Naive thymus-derived CD4-positive, alpha-beta T cell (primary cell): ENCODE measurements at regions of chr3 and their contacts with region 1.

Region 1: GRCh38 chr3:181726351-181727330 is 14.9 kb downstream of the SOX2 start:
- DNase-seq: no peak
- ATAC-seq: no peak
- H3K4me3 ChIP-seq: peak overlapping the region; percentile 45
- H3K4me3 Mint-ChIP-seq: peak overlapping the region; percentile 62 to 84 (median 80)
- H3K27ac ChIP-seq: no peak overlapping the region
- H3K27ac Mint-ChIP-seq: peak overlapping the region in 4 of 9 donors; percentile 20 to 73 (median 60)
- H3K4me1 ChIP-seq: peaks cover 0 to 3% of the 10 kb centered on the region in 2 donors
- H3K4me1 Mint-ChIP-seq: peaks cover 0 to 21% (median 17%) of the 10 kb centered on the region in 7 donors
- H3K27me3 ChIP-seq: peaks cover 16 to 38% of the 10 kb centered on the region in 2 donors
- H3K27me3 Mint-ChIP-seq: peaks cover 90 to 98% (median 94%) of the 10 kb centered on the region in 5 donors

Region 2: GRCh38 chr3:181694805-181695660 is 31.6 kb before region 1 on chr3:
- CTCF ChIA-PET with region 1: no interaction called
- POLR2A ChIA-PET with region 1: no interaction called
- intact Hi-C with region 1: loop called in 1 of 2 experiments (anchors 1 kb)
- DNase-seq: no peak
- ATAC-seq: peak; percentile 16
- H3K4me3 ChIP-seq: no peak overlapping the region
- H3K4me3 Mint-ChIP-seq: peak overlapping the region in 1 of 10 donors; percentile 16
- H3K27ac ChIP-seq: no peak overlapping the region
- H3K27ac Mint-ChIP-seq: no peak overlapping the region
- H3K4me1 ChIP-seq: peaks cover 0 to under 1% of the 10 kb centered on the region in 2 donors
- H3K4me1 Mint-ChIP-seq: peaks cover 0 to 13% (median 5%) of the 10 kb centered on the region in 7 donors
- H3K27me3 ChIP-seq: peaks cover 3 to 5% of the 10 kb centered on the region in 2 donors
- H3K27me3 Mint-ChIP-seq: peaks cover 67 to 80% (median 70%) of the 10 kb centered on the region in 5 donors

Region 3: DNA sequence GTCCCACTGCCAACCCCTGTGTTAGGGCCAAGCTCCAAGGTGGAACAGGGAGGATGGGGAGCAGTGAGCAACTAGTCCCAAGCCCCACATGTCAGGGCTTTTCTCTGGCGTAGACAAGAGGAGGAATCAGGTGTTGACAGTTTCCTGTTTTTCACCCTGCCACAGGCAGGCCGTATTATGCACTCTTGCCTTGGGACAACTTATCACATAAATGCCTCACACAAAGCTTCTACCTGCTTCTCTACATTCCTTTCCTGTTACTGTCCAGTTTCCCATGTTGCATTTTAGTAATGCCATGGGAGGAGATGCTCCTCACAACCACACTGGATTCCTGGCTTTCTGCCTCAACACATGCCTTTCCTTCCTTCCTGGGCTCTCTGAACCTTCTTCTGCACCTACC is 685.4 kb after region 1 on chr3:
- CTCF ChIA-PET with region 1: no interaction called
- POLR2A ChIA-PET with region 1: no interaction called
- intact Hi-C with region 1: no loop called
- DNase-seq: no peak
- ATAC-seq: no peak
- H3K4me3 ChIP-seq: no peak overlapping the region
- H3K4me3 Mint-ChIP-seq: no peak overlapping the region
- H3K27ac ChIP-seq: no peak overlapping the region
- H3K27ac Mint-ChIP-seq: no peak overlapping the region
- H3K4me1 ChIP-seq: no peaks in the 10 kb centered on the region
- H3K4me1 Mint-ChIP-seq: no peaks in the 10 kb centered on the region
- H3K27me3 ChIP-seq: no peaks in the 10 kb centered on the region
- H3K27me3 Mint-ChIP-seq: peaks cover 0 to 6% (median 0%) of the 10 kb centered on the region in 5 donors